HepG2 (cell line): ENCODE measurements at regions of chr12 and their contacts with region 1.

Region 1: GRCh38 chr12:132460571-132460970 is 29.4 kb upstream of the FBRSL1 start:
- DNase-seq: peak; percentile 40
- ATAC-seq: peak; percentile 32; the same call in 2 of the 3 replicates
- H3K4me3 ChIP-seq: no peak overlapping the region
- H3K27ac ChIP-seq: no peak overlapping the region
- H3K4me1 ChIP-seq: peaks cover 7% of the 10 kb centered on the region
- H3K27me3 ChIP-seq: peaks cover 14 to 53% of the 10 kb centered on the region in 2 experiments
- CTCF ChIP-seq: peak; percentile 77
- EP300 ChIP-seq: no peak
- POLR2A ChIP-seq: no peak
- RAD21 ChIP-seq: 0 out of 2 replicates have a peak, but pooled peaks have one; percentile 11

Region 2: DNA sequence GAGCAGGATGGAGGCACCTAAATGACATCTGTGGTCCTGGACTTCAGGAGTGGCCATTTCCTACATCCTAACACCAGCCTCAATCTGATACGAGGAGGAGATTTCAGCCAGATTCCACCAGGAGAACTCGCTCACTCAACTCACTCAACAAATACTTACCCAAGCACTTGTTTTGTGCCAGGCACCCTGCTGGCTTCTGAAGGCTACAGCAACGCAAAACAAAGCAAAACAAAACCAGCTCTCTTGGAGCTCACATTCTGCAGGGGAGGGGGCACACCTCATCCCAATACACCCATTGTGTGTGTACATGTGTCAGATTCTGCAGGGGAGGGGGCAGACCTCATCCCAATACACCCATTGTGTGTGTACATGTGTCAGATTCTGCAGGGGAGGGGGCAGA is 1978.1 kb before region 1 on chr12:
- CTCF ChIA-PET with region 1: no interaction called
- POLR2A ChIA-PET with region 1: no interaction called
- in situ Hi-C with region 1: no loop called
- intact Hi-C with region 1: no loop called
- DNase-seq: no peak
- ATAC-seq: peak; percentile 57; the same call in 2 of the 3 replicates
- H3K4me3 ChIP-seq: no peak overlapping the region
- H3K27ac ChIP-seq: no peak overlapping the region
- H3K4me1 ChIP-seq: no peaks in the 10 kb centered on the region
- H3K27me3 ChIP-seq: peaks cover 3 to 46% of the 10 kb centered on the region in 2 experiments; a peak in 4 of 5 replicates
- CTCF ChIP-seq: no peak
- EP300 ChIP-seq: no peak
- POLR2A ChIP-seq: no peak
- RAD21 ChIP-seq: no peak

Region 3: GRCh38 chr12:132523576-132524331 is 63.2 kb after region 1 on chr12:
- CTCF ChIA-PET with region 1: interaction called, 12 read pairs
- POLR2A ChIA-PET with region 1: no interaction called
- in situ Hi-C with region 1: no loop called
- intact Hi-C with region 1: loop called (anchors 1 kb)
- DNase-seq: peak; percentile 32
- ATAC-seq: peak; percentile 76
- H3K4me3 ChIP-seq: no peak overlapping the region
- H3K27ac ChIP-seq: no peak overlapping the region
- H3K4me1 ChIP-seq: no peaks in the 10 kb centered on the region; the same call in 1 of the 2 replicates
- H3K27me3 ChIP-seq: no peaks in the 10 kb centered on the region
- CTCF ChIP-seq: peak; percentile 90
- EP300 ChIP-seq: no peak
- POLR2A ChIP-seq: no peak
- RAD21 ChIP-seq: peak; percentile 91